ENCODE measurements at regions of chr10 and their contacts with region 1.

Region 1: GRCh38 chr10:112434988-112435619 is 11.6 kb downstream of the ZDHHC6 start:
- DNase-seq: peak; percentile 63
- H3K4me3 ChIP-seq: no peak overlapping the region
- H3K27ac ChIP-seq: no peak overlapping the region
- H3K4me1 ChIP-seq: no peaks in the 10 kb centered on the region
- H3K27me3 ChIP-seq: no peaks in the 10 kb centered on the region
- CTCF ChIP-seq: peak in 1 of 2 donors; percentile 12
- POLR2A ChIP-seq: no peak

Region 2: DNA sequence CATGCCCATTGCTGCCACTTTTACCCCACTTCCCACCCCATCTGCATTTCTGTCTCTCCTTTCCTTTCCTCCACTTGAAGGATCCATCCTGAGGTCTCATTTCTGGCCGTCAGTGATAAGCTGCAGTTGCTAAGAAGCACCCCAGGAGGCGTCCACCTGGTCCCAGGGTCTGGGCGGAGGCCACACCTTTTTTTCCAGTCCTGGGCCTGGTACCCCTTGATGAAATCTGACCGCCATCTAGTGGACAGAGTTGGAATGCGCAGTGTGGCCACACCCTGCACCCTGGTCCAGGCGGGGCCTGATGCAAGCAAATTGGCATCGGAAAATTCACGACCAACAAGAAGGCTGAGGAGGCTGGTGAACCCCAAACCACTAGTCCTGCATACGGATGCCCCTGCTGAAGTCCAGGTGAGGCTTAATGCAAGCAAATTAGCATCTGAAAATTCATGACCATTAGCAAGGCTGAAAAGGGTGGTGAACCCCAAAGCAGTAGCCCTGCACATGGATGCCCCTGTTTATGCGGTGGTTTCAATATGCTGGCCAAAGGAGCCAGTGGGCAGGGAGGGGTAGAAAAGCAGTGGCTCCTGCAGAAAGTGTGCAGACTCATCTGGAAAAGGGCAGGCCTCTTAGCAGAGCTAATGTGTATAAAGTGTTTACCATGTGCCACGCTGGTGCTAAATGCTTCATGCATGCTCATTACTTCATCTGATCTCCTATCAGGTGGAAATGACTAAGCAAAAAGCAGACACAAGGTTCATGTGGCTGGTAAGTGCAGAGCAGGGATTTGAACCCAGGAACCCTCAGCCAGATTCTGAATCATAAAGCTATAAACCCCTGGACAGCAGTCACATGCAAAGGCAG is 294.8 kb before region 1 on chr10:
- CTCF ChIA-PET with region 1: interaction called, 115 read pairs
- POLR2A ChIA-PET with region 1: no interaction called
- dilution Hi-C with region 1: no loop called
- intact Hi-C with region 1: loop called (anchors 1 kb)
- DNase-seq: peak; percentile 67
- H3K4me3 ChIP-seq: no peak overlapping the region
- H3K27ac ChIP-seq: no peak overlapping the region
- H3K4me1 ChIP-seq: no peaks in the 10 kb centered on the region
- H3K27me3 ChIP-seq: no peaks in the 10 kb centered on the region
- CTCF ChIP-seq: peak; percentile 90 to 91
- POLR2A ChIP-seq: no peak

Region 3: GRCh38 chr10:112183329-112184051 is 251.6 kb before region 1 on chr10 and contains the start of gene GPAM:
- CTCF ChIA-PET with region 1: interaction called, 58 read pairs
- POLR2A ChIA-PET with region 1: no interaction called
- dilution Hi-C with region 1: no loop called
- intact Hi-C with region 1: loop called (anchors 2 kb)
- DNase-seq: peak; percentile 94
- H3K4me3 ChIP-seq: peak within 1 kb of the TSS; percentile 80 to 92 (median 83)
- H3K27ac ChIP-seq: peak within 1 kb of the TSS; percentile 37
- H3K4me1 ChIP-seq: peaks cover 14% of the 10 kb centered on the region
- H3K27me3 ChIP-seq: peaks cover 0 to 2% of the 10 kb centered on the region in 2 experiments
- CTCF ChIP-seq: no peak
- POLR2A ChIP-seq: peak; percentile 88
- total RNA-seq, gene GPAM: 8.2 and 9.7 TPM in 2 replicates

Region 4: DNA sequence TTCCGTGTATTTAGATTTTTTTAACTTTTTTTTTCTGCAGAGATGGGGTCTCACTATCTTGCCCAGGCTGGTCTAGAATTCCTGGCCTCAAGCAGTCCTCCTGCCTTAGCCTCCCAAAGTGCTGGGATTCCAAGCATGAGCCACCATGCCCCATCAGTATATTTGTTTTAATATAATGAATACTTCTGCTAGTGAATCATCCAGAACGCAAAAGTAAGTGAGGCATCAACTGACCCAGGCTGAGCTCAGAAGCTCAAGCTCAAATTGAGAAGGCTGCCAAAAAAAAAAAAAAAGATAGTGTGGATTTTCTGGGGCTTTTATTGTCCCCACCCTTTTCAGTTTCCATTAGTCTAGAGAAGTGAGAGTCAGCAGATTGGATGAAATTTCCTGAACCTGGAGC is 190.9 kb before region 1 on chr10:
- CTCF ChIA-PET with region 1: no interaction called
- POLR2A ChIA-PET with region 1: no interaction called
- dilution Hi-C with region 1: no loop called
- intact Hi-C with region 1: no loop called
- DNase-seq: no peak
- H3K4me3 ChIP-seq: no peak overlapping the region
- H3K27ac ChIP-seq: no peak overlapping the region
- H3K4me1 ChIP-seq: no peaks in the 10 kb centered on the region
- H3K27me3 ChIP-seq: no peaks in the 10 kb centered on the region
- CTCF ChIP-seq: no peak
- POLR2A ChIP-seq: no peak

Region 5: GRCh38 chr10:112332509-112333228 is 102.4 kb before region 1 on chr10:
- CTCF ChIA-PET with region 1: interaction called, 97 read pairs
- POLR2A ChIA-PET with region 1: no interaction called
- dilution Hi-C with region 1: no loop called
- intact Hi-C with region 1: no loop called
- DNase-seq: no peak
- H3K4me3 ChIP-seq: no peak overlapping the region
- H3K27ac ChIP-seq: no peak overlapping the region
- H3K4me1 ChIP-seq: no peaks in the 10 kb centered on the region
- H3K27me3 ChIP-seq: peaks cover 4 to 7% of the 10 kb centered on the region in 2 experiments
- CTCF ChIP-seq: no peak
- POLR2A ChIP-seq: no peak

Region 6: DNA sequence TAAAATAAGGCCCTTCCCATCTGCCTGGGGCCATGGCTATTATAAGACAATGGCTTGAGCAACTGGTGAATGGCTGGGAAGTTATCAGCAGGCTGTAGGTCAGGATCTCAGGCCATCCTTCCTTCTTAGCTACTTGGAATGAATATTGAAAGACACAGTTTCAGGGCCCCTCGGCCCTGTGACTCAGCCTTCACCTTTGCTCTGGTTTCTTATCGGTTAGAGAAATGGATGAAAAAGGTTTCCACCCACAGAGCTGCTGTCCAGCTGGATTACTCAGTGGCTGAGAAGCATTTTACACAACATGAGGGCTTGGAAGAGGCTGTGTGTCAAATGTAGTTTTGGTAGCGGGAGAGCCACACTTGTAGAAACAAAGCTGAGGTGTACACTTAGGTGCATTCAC is 51.8 kb before region 1 on chr10:
- CTCF ChIA-PET with region 1: interaction called, 11 read pairs
- POLR2A ChIA-PET with region 1: no interaction called
- dilution Hi-C with region 1: no loop called
- intact Hi-C with region 1: no loop called
- DNase-seq: peak; percentile 77
- H3K4me3 ChIP-seq: no peak overlapping the region
- H3K27ac ChIP-seq: no peak overlapping the region
- H3K4me1 ChIP-seq: peaks cover 23% of the 10 kb centered on the region
- H3K27me3 ChIP-seq: no peaks in the 10 kb centered on the region
- CTCF ChIP-seq: no peak
- POLR2A ChIP-seq: no peak

Region 7: GRCh38 chr10:112446855-112447711 is 12.0 kb after region 1 on chr10 and contains the starts of genes VTI1A and ZDHHC6:
- CTCF ChIA-PET with region 1: interaction called, 15 read pairs
- POLR2A ChIA-PET with region 1: no interaction called
- dilution Hi-C with region 1: no loop called
- intact Hi-C with region 1: no loop called
- DNase-seq: peak; percentile 79
- H3K4me3 ChIP-seq: peak within 1 kb of the TSS; percentile 89 to 98 (median 96)
- H3K27ac ChIP-seq: peak within 1 kb of the TSS; percentile 94
- H3K4me1 ChIP-seq: peaks cover 18% of the 10 kb centered on the region
- H3K27me3 ChIP-seq: no peaks in the 10 kb centered on the region
- CTCF ChIP-seq: peak in 1 of 2 donors; percentile 36
- POLR2A ChIP-seq: peak; percentile 91
- total RNA-seq, gene VTI1A: 35.6 and 36.8 TPM in 2 replicates
- total RNA-seq, gene ZDHHC6: 41.9 and 42.1 TPM in 2 replicates